ENCODE measurements at regions of chr16 and their contacts with region 1.

Region 1: DNA sequence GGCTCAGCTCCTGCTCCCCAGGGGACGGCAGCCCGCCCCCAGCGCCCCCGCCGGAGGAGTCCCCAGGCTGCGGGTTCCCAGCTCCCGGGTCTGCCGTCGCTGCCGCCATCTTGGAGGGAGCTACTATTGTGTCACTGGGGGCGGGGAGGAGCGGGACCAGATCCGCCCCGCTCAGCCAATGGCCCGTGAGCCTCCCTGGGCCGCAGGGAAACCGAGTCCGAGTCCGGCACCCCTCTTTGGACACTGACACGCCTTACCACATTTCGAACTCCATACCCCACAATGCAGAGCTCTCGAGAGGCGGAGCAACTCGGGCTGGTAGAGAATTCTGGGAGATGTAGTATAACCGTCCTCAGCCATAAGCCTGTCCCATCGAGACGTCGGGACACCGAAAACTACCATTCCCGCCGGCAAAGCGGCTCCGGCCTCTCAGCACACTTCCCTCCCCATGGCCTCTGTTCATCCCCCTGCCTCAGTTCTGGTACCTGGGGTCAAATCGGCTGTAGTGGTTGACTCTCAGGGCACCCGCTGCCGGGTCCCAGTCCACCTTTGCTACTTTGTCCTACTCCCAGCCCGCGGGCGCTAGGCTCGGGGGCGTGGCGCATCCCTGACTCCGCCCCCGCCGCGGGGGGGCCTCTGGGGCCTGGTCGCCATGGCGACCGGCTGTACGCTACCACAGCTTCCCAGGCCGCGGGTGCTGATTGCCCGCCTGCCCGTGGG is at the starts of genes RANBP10 and TSNAXIP1:
- DNase-seq: peak; percentile 97 to 98 (median 98)
- ATAC-seq: peak; percentile 98 to 99 (median 98)
- H3K4me3 ChIP-seq: peak within 1 kb of the TSS; percentile 62 to 98 (median 80)
- H3K27ac ChIP-seq: peak within 1 kb of the TSS in 11 of 12 donors; percentile 68 to 93 (median 84)
- H3K4me1 ChIP-seq: peaks cover 0 to 39% (median 17%) of the 10 kb centered on the region in 12 donors
- H3K27me3 ChIP-seq: no peaks in the 10 kb centered on the region
- CTCF ChIP-seq: no peak
- POLR2A ChIP-seq: peak in 1 of 2 donors; percentile 91
- total RNA-seq, gene RANBP10: 7.1 to 19.7 (median 12.3) TPM
- total RNA-seq, gene TSNAXIP1: 0.16 to 0.93 (median 0.46) TPM in 8 of 9 donors, not detected in the other

Region 2: DNA sequence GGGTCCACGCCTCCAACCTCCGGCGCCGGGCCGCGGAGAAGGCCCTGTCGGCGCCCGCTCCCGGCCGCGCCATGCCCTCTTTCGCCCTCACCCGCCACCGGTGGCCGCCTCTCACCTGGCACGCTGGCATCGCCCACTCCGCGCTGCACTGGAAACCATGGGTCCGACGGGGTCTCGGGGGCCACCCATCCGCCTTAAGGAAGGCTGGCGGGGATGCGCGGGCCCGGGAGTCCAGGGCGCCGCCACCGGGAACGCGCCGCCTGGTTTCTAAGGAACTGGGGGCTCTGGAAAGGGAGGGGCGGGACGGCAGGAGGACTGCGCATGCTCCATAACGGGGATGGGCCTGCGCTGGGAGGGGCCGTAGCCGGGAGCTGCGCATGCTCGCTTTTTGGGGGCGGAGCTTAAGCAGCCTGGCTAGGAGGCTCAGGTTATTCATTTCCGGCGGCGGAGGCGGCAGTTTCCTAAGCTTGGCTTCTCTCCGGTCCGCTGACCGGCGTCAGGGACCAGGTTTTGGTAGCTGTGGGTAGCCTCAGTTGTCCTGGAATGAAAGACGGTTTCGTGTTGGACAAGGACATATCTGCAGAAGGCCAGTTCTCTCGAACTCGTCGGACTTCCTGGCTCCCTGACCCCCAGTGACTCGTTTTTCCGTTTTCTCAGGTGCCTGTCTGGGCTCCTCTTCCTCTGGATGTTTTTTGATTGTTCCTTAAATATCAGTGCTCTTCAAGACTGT is 87.4 kb before region 1 on chr16 and contains the start of gene GFOD2:
- intact Hi-C with region 1: loop called in 3 of 10 experiments (anchors 5 to 10 kb)
- DNase-seq: peak; percentile 97 to 99 (median 97)
- ATAC-seq: peak; percentile 99
- H3K4me3 ChIP-seq: peak within 1 kb of the TSS; percentile 62 to 100 (median 90)
- H3K27ac ChIP-seq: peak within 1 kb of the TSS; percentile 77 to 95 (median 88)
- H3K4me1 ChIP-seq: peaks cover 0 to 35% (median 22%) of the 10 kb centered on the region in 12 donors
- H3K27me3 ChIP-seq: no peaks in the 10 kb centered on the region
- CTCF ChIP-seq: peak in 1 of 12 donors; percentile 17
- POLR2A ChIP-seq: peak in 1 of 2 donors; percentile 94
- total RNA-seq, gene GFOD2: 6.5 to 11.7 (median 9.8) TPM